Posterior vena cava (tissue), 2 donors: ENCODE measurements at regions of chr16 and their contacts with region 1.

Region 1: DNA sequence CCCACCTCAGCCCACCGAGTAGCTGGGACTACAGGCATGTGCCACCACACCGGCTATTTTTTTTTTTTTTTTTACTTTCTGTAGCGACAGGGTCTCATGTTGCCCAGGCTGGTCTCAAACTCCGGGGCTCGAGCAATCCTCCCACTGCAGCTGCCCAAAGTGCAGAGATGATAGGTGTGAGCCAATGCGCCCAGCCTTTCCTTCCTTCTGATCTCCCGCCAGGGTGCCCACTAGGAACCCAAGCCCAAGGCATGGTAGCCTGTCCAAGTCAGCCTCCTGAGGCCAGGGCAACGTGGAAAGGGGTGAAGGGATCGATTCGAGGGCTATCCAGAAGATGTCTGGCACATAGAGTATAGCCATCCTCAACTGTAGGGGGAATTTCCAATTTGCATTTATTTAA is 9.6 kb upstream of the CREBBP start:
- DNase-seq: peak; percentile 43

Region 2: GRCh38 chr16:3807425-3808123 is 82.5 kb before region 1 on chr16:
- intact Hi-C with region 1: no loop called
- DNase-seq: no peak

Region 3: DNA sequence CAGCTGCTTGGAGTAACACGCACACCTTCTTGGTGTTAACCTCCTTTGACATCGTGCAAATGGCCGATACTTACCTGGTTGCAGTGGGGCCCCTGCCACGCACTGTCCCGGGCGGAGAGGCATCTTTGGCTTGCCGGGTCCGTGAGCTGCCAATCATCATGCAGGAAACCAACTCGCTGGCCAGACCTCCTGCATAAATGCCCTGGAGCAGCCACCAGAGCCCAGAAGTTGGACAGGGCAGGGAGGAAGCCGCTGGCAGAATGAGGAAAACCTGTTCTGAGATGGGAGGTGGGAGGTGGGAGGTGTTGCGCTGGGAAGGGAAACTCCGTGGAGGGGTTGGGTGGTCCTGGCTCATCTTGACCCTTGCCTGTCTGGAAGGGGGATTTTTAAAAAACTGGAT is 32.2 kb after region 1 on chr16:
- intact Hi-C with region 1: loop called in 1 of 2 experiments (anchors 2 kb)
- DNase-seq: peak; percentile 60

Region 4: DNA sequence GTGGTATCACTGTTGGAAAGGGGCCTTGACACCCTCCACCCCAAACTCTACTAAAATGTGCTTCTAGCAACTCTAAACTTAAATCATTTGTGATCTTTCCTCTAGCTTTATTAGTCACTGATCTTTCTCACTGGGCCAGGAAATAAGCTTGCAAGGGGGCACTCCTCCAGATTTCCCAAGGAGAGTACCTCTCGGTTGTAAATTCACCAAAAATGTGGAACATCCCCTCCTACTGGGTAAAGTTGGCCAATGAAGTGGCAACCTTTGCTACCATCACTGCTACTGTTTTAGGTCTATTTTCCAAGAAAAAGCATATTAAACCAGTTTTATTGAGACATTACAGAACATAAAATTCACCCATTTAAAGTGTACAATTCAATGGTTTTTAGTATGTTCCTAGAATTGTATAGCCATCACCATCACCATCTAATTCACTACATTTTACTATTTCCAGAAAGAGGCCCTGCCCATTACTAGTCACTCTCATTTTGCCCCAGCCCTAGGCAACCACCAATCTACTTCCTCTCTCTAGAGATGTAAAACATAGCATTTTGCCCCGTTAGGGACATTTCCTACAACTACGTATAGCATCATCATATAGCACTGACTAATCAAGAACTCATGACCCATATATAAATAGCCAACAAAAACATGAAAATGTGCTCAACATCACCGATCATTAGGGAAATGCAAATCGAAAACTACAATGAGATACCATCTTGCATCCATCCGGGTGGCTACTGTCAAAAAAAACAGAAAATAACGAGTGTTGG is 270.8 kb after region 1 on chr16:
- intact Hi-C with region 1: no loop called
- DNase-seq: no peak